ENCODE measurements at regions of chr11 and their contacts with region 1.

Region 1: GRCh38 chr11:134139873-134140331 is 71.0 kb downstream of the JAM3 start:
- DNase-seq: no peak
- H3K4me3 ChIP-seq: no peak overlapping the region
- H3K27ac ChIP-seq: peak overlapping the region; percentile 35
- H3K4me1 ChIP-seq: peaks cover 6% of the 10 kb centered on the region
- H3K27me3 ChIP-seq: no peaks in the 10 kb centered on the region
- CTCF ChIP-seq: peak; percentile 94

Region 2: GRCh38 chr11:133927690-133928627 is 211.9 kb before region 1 on chr11:
- intact Hi-C with region 1: loop called (anchors 10 kb)
- DNase-seq: peak; percentile 59
- H3K4me3 ChIP-seq: peak overlapping the region; percentile 30
- H3K27ac ChIP-seq: no peak overlapping the region
- H3K4me1 ChIP-seq: peaks cover 17% of the 10 kb centered on the region
- H3K27me3 ChIP-seq: no peaks in the 10 kb centered on the region
- CTCF ChIP-seq: peak; percentile 92

Region 3: DNA sequence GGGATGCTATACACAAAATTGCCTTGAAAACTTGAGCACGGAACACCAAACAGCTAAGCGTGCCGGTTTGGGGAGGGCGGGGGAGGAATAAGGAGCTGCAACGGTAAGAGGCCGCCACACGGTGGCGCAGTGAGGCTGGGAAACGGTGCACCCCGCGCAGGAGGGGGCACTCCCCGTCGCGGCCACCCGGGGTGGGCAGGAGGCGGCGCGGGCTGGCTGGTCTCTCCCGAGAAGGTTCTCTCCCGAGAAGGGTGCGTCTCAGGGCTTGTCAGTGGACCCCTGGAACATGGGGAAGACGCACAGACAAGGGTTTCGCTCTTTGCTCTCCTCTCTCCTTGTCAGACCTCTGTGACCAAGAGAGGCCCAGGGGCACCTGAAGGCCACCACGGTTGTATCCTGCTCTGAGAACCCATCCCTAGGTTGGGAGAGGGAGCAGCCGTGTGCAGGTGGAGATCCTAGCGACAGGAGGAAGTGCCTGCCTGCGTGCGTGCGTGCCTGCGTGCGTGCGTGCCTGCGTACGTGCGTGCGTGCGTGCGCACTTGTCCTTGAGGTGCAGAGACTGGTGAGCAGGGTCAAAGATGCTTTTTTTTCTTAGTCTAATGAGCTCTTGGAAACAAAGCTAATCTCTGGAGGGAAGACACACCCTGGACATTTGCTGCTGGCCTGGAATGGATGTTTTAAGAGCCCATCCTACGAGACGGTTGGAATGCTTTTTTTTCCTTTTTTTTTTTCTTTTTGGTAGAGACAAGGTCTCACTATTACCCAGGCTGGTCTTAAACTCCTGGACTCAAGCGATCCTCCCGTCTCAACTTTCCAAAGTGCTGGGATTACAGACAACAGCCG is 89.1 kb before region 1 on chr11:
- intact Hi-C with region 1: loop called (anchors 2 kb)
- DNase-seq: peak; percentile 71
- H3K4me3 ChIP-seq: peak overlapping the region; percentile 54
- H3K27ac ChIP-seq: no peak overlapping the region
- H3K4me1 ChIP-seq: peaks cover 31% of the 10 kb centered on the region
- H3K27me3 ChIP-seq: no peaks in the 10 kb centered on the region
- CTCF ChIP-seq: peak; percentile 97

Region 4: DNA sequence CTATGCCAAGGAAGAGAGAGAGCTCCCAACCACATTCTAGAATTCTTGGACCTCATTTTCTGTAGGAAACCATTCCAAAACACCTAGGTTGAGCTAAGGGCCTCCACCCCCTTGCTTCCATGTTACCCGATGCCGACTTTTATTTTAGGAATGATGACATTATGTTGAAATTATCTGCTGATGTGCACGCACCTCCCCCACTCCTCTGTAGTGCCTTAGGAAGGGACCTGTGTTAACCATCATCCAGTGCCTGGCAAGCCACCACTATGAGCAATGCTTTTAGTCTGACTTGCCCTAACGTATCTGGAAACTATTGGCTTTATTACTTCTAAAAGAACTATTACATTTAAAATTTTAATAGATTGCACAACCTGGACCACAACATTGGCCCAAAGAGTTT is 41.8 kb after region 1 on chr11:
- intact Hi-C with region 1: no loop called
- DNase-seq: no peak
- H3K4me3 ChIP-seq: no peak overlapping the region
- H3K27ac ChIP-seq: no peak overlapping the region
- H3K4me1 ChIP-seq: peaks cover 15% of the 10 kb centered on the region
- H3K27me3 ChIP-seq: no peaks in the 10 kb centered on the region
- CTCF ChIP-seq: no peak

Measured in left ventricle myocardium inferior (tissue), 1 donor.